ENCODE measurements at regions of chr1 and their contacts with region 1.

Region 1: GRCh38 chr1:213507472-213508223 is 456.6 kb downstream of the RPS6KC1 start:
- DNase-seq: no peak
- ATAC-seq: no peak
- H3K4me3 ChIP-seq: no peak overlapping the region
- H3K27ac ChIP-seq: no peak overlapping the region
- H3K4me1 ChIP-seq: no peaks in the 10 kb centered on the region
- H3K27me3 ChIP-seq: no peaks in the 10 kb centered on the region
- CTCF ChIP-seq: no peak
- POLR2A ChIP-seq: no peak
- RAD21 ChIP-seq: no peak

Region 2: DNA sequence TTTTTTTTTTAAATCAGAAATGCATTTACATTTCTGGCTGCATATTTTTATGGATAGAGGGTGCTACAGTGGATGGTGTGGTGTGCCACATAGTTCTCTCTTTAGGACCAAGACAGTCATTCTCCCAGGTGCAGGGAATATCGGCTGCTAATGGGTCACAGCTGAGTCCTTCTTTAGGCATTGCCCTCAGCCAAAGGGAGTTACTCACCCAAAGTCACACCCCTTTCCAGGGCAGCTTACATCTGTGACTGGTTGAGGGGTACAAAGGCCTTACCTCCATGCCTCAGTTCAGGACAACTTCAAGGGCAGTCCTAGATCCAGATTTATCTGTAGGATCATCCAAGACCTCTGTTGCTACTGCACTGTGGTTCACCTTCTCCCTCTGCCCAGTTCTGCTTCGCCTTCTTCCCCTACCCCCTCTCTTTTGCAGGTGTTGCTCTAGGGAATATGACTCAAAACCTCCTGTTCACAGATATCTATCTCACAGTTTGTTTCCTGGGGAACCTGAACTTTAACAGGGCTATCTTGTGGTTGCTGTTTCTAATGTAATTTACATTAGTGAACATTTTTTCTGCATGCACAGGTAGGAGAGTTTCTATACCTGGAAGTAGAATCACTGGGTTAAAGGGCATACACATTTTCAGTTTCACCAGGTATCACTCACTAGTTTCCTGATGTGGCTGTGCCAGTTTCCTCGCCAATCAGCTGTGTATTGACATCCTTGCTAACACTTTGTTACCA is 42.7 kb before region 1 on chr1:
- CTCF ChIA-PET with region 1: no interaction called
- POLR2A ChIA-PET with region 1: no interaction called
- dilution Hi-C with region 1: no loop called
- in situ Hi-C with region 1: no loop called
- intact Hi-C with region 1: no loop called
- DNase-seq: no peak
- ATAC-seq: no peak
- H3K4me3 ChIP-seq: no peak overlapping the region
- H3K27ac ChIP-seq: no peak overlapping the region
- H3K4me1 ChIP-seq: no peaks in the 10 kb centered on the region
- H3K27me3 ChIP-seq: no peaks in the 10 kb centered on the region
- CTCF ChIP-seq: no peak
- POLR2A ChIP-seq: no peak
- RAD21 ChIP-seq: no peak

Region 3: DNA sequence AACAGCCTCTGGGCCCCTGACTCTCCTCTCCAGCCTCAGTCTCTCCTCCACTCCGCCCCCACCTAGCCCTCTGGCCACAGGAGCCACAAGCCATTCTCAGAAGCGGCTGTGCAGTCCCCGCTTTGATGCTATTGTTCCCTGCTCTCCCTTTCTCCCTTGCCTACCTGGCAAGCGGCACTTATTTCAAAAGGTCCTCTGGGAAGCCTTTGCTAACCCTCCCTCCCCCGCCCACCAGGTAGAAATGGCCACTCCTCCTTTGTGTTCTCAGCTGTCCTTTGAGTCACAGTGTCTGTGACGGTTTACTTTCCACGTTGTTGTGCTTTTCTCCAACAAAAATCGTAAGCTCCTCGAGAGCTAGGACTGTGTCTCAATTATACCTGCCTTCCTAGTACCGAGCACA is 141.7 kb after region 1 on chr1:
- CTCF ChIA-PET with region 1: no interaction called
- POLR2A ChIA-PET with region 1: no interaction called
- dilution Hi-C with region 1: no loop called
- in situ Hi-C with region 1: no loop called
- intact Hi-C with region 1: loop called (anchors 10 kb)
- DNase-seq: no peak
- ATAC-seq: no peak
- H3K4me3 ChIP-seq: no peak overlapping the region
- H3K27ac ChIP-seq: no peak overlapping the region
- H3K4me1 ChIP-seq: no peaks in the 10 kb centered on the region
- H3K27me3 ChIP-seq: no peaks in the 10 kb centered on the region
- CTCF ChIP-seq: no peak
- POLR2A ChIP-seq: no peak
- RAD21 ChIP-seq: no peak